BJ (cell line): ENCODE measurements at regions of chr20 and their contacts with region 1.

Region 1: DNA sequence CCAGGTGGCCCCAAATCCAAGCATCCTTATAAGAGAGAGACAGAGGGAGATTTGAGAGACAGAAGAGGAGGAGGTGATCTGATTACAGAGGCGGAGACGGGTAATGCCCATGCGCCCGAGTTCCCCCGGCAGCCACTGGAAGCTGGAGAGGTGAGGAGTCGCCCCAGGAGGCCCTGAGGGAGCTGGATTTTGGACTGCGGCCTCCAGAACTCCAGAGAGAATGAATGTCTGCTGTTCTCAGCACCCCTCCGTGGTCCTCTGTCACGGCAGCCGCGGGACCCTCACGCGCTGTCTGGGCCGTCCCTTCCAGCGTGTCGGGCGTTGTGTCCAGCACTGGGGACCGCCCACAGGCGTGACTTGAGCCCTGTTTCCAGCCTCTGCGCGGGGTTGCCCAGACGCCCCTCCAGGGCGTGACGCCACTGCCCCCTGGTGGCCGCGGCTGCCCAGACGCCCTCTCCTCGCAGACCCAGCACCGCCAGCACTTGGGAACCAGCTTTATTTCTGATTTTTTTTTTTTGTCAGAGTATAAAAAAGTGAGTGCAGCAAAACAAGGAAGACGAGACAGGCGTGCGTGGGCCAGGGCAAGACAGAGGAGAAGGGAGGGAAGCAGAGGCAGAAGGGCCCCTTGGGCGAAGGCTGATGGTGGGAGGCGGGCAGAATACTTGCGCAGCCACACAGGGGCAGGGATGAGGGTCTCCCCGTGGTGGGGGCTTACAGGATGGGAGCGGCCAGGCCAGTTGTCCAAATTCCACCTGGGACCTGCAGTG is 4.1 kb upstream of the ZNF512B start:
- DNase-seq: peak; percentile 25
- H3K4me3 ChIP-seq: peak overlapping the region; percentile 38
- H3K27me3 ChIP-seq: no peaks in the 10 kb centered on the region
- CTCF ChIP-seq: peak; percentile 99

Region 2: DNA sequence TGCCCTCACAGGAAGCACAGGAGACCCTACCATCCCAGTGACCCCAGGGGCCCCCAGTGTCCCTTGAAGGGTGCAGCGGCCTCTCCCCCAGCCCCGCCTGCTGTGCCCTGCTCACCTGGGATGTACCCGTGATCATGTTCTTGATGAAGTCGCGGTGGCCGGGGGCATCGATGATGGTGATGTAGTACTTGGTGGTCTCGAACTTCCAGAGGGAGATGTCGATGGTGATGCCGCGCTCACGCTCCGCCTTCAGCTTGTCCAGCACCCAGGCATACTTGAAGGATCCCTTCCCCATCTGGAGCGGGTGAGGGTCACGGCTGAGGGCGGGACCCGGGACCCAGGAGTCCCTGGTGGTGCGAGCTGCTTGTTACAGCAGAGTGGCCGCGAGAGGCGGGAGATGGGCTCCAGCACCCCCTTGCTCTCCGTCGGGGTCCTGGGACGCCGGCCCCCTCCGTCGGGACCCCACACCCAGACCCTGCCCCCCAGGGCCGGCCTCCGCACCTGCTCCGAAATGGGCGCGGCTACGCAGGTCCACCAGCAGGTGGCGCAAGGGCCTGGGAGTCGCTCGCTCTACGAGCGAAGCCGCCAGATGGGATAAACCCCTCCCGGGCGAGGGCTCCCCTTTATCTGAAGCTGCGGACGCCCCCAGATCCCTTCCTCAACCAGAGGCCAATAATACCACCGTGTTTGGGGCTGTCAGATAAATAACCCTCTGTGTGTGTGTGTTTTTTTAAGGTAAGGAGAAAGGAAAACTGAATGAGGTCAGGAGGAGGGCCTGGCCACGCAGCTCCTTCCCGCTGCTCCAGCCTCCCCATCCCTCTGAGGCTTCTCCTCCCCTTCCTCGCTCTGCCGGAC is 477.9 kb before region 1 on chr20:
- CTCF ChIA-PET with region 1: interaction called, 23 read pairs
- POLR2A ChIA-PET with region 1: no interaction called
- DNase-seq: no peak
- H3K4me3 ChIP-seq: no peak overlapping the region
- H3K27me3 ChIP-seq: peaks cover 3% of the 10 kb centered on the region
- CTCF ChIP-seq: peak; percentile 95

Region 3: DNA sequence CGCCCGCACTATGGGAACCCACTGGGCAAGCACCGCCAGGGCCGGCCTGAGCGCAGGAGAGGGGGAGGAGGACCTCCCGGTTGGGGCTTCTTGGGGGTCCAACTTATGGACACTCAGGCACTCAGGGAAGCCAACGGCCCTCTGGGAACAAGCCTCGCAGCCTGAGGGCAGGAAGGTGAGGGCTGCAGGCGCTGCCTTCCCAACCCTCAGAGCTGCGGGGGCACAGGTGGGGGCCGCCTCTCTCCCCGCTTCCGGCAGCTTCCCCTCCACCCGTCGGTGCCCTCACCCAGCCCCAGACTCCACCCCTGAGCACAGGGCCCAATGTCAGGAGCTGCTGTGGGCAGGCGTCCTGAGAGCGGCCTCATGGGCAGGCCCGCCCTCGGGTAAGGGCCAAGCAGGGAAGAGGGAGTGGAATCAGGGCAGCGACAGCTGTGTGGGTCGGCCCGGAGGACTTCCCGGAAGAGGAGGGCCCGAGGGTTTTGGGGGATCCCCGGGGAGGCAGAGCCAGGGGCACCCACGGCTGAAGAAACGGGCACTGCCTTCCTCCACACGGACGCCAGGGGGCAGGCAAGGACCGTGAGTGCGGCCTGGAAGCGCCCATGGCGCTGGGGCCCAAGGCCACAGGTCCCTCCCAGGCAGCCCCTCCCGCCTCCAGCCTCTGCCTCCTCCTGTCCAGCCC is 436.2 kb before region 1 on chr20:
- CTCF ChIA-PET with region 1: interaction called, 53 read pairs
- POLR2A ChIA-PET with region 1: no interaction called
- DNase-seq: peak; percentile 47
- H3K4me3 ChIP-seq: peak overlapping the region; percentile 30
- H3K27me3 ChIP-seq: no peaks in the 10 kb centered on the region
- CTCF ChIP-seq: peak; percentile 95

Region 4: DNA sequence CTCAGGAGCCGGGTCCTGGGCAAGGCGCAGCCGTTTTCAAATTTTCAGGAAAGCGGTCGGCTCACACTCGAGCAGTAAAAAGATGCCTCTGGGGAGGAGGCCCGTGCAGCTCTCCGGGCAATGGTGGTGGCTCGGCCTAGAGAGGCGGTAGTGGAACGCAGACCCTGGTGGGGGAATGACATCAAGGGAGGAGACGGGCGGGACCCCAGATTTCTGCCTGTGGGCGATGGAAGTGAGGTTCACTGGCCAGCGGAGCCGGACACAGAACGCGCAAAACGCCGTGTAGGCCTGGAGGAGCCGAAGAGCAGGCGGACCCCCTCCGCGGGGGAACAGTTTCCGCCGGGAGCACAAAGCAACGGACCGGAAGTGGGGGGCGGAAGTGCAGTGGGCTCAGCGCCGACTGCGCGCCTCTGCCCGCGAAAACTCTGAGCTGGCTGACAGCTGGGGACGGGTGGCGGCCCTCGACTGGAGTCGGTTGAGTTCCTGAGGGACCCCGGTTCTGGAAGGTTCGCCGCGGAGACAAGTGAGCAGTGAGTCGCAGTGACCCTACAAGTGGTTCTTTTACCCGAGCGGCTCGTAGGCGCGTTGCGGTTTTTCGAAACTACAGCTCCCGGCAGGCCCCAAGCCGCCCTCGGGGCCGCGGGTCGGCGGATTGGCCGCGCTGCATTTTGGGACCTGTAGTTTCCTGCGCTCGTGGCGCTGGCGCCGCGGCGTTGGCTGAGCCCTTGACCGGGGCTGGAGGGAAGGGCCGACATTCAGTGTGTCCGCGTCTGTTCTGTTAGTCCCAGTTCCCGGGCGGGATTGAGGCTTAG is 315.7 kb before region 1 on chr20 and contains the start of gene RTEL1:
- CTCF ChIA-PET with region 1: no interaction called
- POLR2A ChIA-PET with region 1: interaction called, 10 read pairs
- DNase-seq: peak; percentile 31
- H3K4me3 ChIP-seq: peak within 1 kb of the TSS; percentile 85
- H3K27me3 ChIP-seq: no peaks in the 10 kb centered on the region
- CTCF ChIP-seq: no peak
- polyA plus RNA-seq, gene RTEL1: 13.6 and 18.3 TPM in 2 replicates

Region 5: DNA sequence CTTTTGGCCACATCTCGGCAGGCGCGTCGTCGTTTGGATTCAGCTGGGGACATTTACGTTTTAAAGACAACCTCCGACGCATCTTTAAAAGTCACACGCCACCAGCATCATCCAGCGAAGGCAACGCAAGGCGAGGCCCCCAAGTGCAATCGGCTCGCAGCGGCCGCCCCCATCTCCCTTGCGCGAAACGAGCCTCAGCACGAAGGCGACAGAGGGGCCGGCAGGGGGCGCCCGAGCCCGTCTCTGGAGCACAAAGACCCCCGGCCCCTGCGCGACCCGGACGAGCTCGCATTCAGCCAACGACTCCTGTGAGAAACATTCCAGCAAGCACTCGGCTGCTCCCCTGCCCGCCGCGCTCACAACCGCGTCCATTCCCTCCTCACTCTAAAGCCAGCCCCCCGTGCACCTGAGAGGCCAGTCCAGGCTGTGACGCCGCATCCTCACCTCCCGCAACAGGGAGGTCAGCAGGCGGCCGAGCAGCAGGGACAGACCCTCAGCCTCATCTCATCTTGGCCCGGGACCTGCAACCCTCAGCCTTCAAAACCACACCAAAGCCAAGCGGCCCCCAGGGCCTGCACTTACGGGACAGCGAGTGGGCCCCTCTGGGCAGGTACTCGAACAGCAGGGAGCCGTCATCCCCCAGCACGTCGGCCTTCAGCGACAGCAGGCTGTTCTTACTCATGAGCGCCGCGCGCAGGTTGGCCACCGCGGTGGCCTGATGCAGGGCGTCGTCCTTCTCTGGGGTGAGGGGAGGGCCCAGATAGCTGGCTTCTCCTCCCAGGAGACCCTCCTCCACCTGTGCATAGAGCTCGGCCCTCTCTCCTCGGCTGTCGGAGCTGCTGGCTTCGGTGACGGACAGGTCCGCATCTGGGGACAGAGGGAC is 198.5 kb before region 1 on chr20:
- CTCF ChIA-PET with region 1: interaction called, 12 read pairs
- POLR2A ChIA-PET with region 1: no interaction called
- DNase-seq: no peak
- H3K4me3 ChIP-seq: peak overlapping the region; percentile 28
- H3K27me3 ChIP-seq: no peaks in the 10 kb centered on the region
- CTCF ChIP-seq: peak; percentile 87

Region 6: DNA sequence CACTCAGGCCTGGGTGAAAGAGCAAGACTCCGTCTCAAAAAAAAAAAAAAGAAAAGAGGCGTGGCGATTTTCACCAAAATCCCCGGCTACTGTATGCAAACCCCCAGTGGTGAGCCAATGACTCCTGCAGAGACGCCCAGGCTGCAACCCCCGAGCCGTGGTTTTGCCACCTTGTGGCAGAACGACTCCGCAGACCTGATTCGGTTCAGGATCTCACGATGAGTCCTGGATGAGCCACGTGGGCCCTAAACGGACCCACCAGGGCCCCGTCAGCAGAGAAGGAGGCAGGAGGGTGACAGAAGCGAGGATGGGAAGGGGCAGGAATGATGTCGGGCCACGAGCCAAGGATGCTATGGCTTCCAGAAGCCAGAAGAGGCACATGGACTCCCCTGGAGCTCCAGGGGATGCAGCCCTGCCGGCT is 191.8 kb before region 1 on chr20:
- CTCF ChIA-PET with region 1: interaction called, 17 read pairs
- POLR2A ChIA-PET with region 1: no interaction called
- DNase-seq: no peak
- H3K4me3 ChIP-seq: no peak overlapping the region
- H3K27me3 ChIP-seq: no peaks in the 10 kb centered on the region
- CTCF ChIP-seq: no peak

Region 7: GRCh38 chr20:63864847-63865640 is 108.8 kb before region 1 on chr20 and contains the start of gene TPD52L2:
- CTCF ChIA-PET with region 1: interaction called, 13 read pairs
- POLR2A ChIA-PET with region 1: no interaction called
- DNase-seq: peak; percentile 87
- H3K4me3 ChIP-seq: peak within 1 kb of the TSS; percentile 85
- H3K27me3 ChIP-seq: no peaks in the 10 kb centered on the region
- CTCF ChIP-seq: no peak
- polyA plus RNA-seq, gene TPD52L2: 243 and 288 TPM in 2 replicates